A549 (cell line): ENCODE measurements at regions of chr11 and their contacts with region 1.

Region 1: DNA sequence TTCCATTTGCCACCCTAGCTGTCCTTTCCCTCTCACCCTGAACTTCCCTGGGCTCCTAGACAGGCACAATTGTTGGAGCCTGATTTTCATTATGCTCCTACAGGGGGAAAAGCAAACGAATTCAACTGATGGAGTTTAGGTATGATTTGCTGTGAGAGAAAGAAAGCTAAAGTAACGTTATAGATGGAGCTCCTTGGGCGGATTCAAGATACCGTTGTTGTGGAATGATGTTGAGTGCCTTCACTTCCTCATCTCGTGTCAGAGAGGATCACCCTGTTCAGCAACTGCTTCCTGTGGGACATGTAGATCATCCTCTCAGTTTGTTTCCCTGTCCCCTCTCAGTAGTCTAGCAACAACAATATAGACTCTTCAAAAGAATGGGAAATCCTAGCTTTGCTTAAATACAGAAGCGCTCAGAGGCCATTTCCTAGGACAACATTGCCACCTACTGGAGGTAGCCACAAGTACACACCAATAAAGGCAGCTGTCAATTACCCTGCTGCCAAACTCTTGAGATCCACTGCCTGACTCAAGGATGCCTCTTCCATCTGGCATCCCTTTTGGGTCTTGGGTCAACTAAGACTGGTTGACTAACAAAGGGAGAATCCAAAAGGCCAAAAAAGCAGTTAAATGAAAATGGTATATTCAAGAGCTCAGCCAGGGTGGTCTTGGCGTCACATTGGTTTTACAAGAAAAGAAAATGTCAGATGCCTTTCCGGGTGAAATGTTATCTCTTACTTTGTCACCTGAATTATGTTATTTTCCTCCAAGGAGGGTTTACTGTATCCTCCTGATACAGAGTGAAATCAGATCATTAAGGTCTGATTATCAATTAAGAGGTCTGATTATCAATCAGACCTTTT is 13.5 kb upstream of the DTX4 start:
- DNase-seq: peak; percentile 72 to 74
- ATAC-seq: peak; percentile 94 to 97
- H3K4me3 ChIP-seq: no peak overlapping the region
- H3K27ac ChIP-seq: no peak overlapping the region
- H3K4me1 ChIP-seq: no peaks in the 10 kb centered on the region
- CTCF ChIP-seq: peak; percentile 87
- EP300 ChIP-seq: no peak
- POLR2A ChIP-seq: no peak
- RAD21 ChIP-seq: peak; percentile 86 to 90

Region 2: GRCh38 chr11:58654079-58654907 is 504.1 kb before region 1 on chr11:
- CTCF ChIA-PET with region 1: interaction called, 13 read pairs
- POLR2A ChIA-PET with region 1: no interaction called
- DNase-seq: peak; percentile 67 to 77
- ATAC-seq: peak; percentile 98 to 100
- H3K4me3 ChIP-seq: no peak overlapping the region
- H3K27ac ChIP-seq: no peak overlapping the region
- H3K4me1 ChIP-seq: peaks cover 4% of the 10 kb centered on the region; the same call in 1 of the 3 replicates
- CTCF ChIP-seq: peak; percentile 87
- EP300 ChIP-seq: no peak
- POLR2A ChIP-seq: no peak
- RAD21 ChIP-seq: peak; percentile 71 to 72

Region 3: GRCh38 chr11:59097113-59097708 is 61.2 kb before region 1 on chr11:
- CTCF ChIA-PET with region 1: interaction called, 12 read pairs
- POLR2A ChIA-PET with region 1: no interaction called
- DNase-seq: peak in 1 of 2 experiments; percentile 72
- ATAC-seq: peak; percentile 63 to 87; a peak in 4 of 6 replicates
- H3K4me3 ChIP-seq: no peak overlapping the region
- H3K27ac ChIP-seq: no peak overlapping the region
- H3K4me1 ChIP-seq: peaks cover 4% of the 10 kb centered on the region; the same call in 1 of the 3 replicates
- CTCF ChIP-seq: peak; percentile 53
- EP300 ChIP-seq: no peak
- POLR2A ChIP-seq: no peak
- RAD21 ChIP-seq: peak; percentile 23 to 46; a peak in 3 of 5 replicates

Region 4: DNA sequence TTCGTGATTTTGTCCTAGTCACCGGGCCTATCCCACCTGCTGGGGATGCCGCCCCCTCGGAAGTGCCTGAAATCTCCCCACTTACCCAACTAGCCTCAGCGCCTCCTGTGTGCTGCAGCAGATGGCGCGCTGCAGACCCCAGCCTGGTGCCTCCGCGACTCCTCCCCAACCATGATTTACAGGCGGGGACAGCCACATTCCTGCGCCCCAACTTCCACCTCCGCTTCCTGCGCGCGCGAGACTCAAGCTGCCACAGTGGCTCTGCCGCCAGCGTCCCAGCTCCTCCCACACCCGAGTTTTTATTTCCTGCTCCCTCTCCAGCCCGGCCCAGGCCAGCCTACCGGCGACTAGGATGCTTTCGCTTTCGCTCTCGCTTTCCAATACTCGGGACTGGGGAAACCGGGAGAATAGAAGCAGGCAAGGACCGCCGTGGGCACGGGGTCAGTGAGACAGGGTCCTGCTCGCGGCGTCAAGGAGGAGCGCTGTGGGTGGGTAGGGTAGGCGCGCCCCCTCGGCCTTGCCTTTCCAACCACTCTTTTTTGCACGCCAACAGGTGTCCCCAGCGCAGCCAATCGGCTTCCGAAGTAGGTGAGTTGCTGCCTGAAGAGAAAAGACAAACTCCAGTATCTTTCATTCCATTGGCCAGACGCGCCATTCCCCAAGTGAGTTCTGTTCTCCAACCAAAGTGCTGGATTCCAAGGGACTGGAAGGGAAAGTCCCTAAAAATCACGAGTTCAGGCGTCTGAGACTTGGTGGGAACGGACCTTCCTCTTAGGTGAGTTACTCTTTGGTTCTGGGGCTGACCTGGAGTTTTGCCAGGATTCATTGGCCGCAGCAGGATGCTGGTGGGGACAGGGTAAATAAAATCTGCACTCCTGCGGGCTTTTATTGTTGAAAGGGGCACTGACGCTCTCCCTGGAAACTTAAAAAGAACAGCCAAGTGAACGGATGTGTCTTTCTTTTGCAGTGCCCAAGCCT is 15.6 kb before region 1 on chr11 and contains the start of gene FAM111A:
- CTCF ChIA-PET with region 1: interaction called, 44 read pairs
- POLR2A ChIA-PET with region 1: interaction called, 5 read pairs
- DNase-seq: peak; percentile 81 to 86
- ATAC-seq: peak; percentile 88 to 90
- H3K4me3 ChIP-seq: peak within 1 kb of the TSS; percentile 73
- H3K27ac ChIP-seq: peak within 1 kb of the TSS; percentile 81 to 86
- H3K4me1 ChIP-seq: peaks cover 25% of the 10 kb centered on the region
- CTCF ChIP-seq: peak; percentile 34; the same call in 2 of the 3 replicates
- EP300 ChIP-seq: no peak
- POLR2A ChIP-seq: peak; percentile 42
- RAD21 ChIP-seq: no peak
- polyA plus RNA-seq, gene FAM111A: 21.8 TPM in 2 replicates

Region 5: GRCh38 chr11:59186130-59186594 is 27.7 kb after region 1 on chr11:
- CTCF ChIA-PET with region 1: interaction called, 11 read pairs
- POLR2A ChIA-PET with region 1: no interaction called
- DNase-seq: peak; percentile 24 to 41
- ATAC-seq: peak in 1 of 2 experiments; percentile 87; a peak in 3 of 6 replicates
- H3K4me3 ChIP-seq: no peak overlapping the region
- H3K27ac ChIP-seq: no peak overlapping the region
- H3K4me1 ChIP-seq: peaks cover 5% of the 10 kb centered on the region; the same call in 1 of the 3 replicates
- CTCF ChIP-seq: peak; percentile 33; the same call in 2 of the 3 replicates
- EP300 ChIP-seq: no peak
- POLR2A ChIP-seq: no peak
- RAD21 ChIP-seq: no peak